Adrenal gland (tissue), 19 donors: ENCODE measurements at regions of chr5 and their contacts with region 1.

Region 1: GRCh38 chr5:144203750-144204596 is 33.3 kb downstream of the KCTD16 start:
- DNase-seq: peak; percentile 18 to 73 (median 44)
- H3K4me3 ChIP-seq: no peak overlapping the region
- H3K27ac ChIP-seq: no peak overlapping the region
- H3K4me1 ChIP-seq: no peaks in the 10 kb centered on the region
- H3K27me3 ChIP-seq: peaks cover 17% of the 10 kb centered on the region
- CTCF ChIP-seq: peak; percentile 66 to 91 (median 82)
- POLR2A ChIP-seq: no peak

Region 2: GRCh38 chr5:143921525-143922311 is 282.3 kb before region 1 on chr5:
- intact Hi-C with region 1: no loop called
- DNase-seq: no peak
- H3K4me3 ChIP-seq: no peak overlapping the region
- H3K27ac ChIP-seq: no peak overlapping the region
- H3K4me1 ChIP-seq: no peaks in the 10 kb centered on the region
- H3K27me3 ChIP-seq: no peaks in the 10 kb centered on the region
- CTCF ChIP-seq: no peak
- POLR2A ChIP-seq: no peak

Region 3: DNA sequence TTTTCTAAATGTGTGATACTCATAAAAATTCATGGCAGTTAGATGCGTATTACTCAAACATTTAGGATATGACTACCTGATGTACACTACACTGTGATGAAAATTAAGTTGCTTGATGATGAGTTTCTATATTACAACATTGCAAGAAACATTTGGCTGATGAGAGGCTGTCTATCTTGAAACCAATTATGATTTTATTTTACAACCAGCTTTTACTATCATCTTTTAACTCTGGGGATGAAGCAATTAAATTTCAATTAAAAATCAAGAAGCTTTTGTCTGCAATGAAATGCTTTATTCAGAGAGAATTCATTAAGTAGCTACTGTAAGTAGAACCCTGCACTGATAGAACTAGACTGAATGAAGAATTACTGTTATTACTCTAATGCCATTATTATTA is 467.1 kb after region 1 on chr5:
- intact Hi-C with region 1: no loop called
- DNase-seq: no peak
- H3K4me3 ChIP-seq: no peak overlapping the region
- H3K27ac ChIP-seq: no peak overlapping the region
- H3K4me1 ChIP-seq: no peaks in the 10 kb centered on the region
- H3K27me3 ChIP-seq: no peaks in the 10 kb centered on the region
- CTCF ChIP-seq: no peak
- POLR2A ChIP-seq: no peak

Region 4: GRCh38 chr5:146049014-146049703 is 1845.2 kb after region 1 on chr5:
- intact Hi-C with region 1: loop called in 1 of 2 experiments (anchors 10 kb)
- DNase-seq: peak; percentile 36 to 73 (median 52)
- H3K4me3 ChIP-seq: no peak overlapping the region
- H3K27ac ChIP-seq: no peak overlapping the region
- H3K4me1 ChIP-seq: no peaks in the 10 kb centered on the region
- H3K27me3 ChIP-seq: no peaks in the 10 kb centered on the region
- CTCF ChIP-seq: peak; percentile 39 to 69 (median 64)
- POLR2A ChIP-seq: no peak